PC-3 (cell line): ENCODE measurements at regions of chr16 and their contacts with region 1.

Region 1: DNA sequence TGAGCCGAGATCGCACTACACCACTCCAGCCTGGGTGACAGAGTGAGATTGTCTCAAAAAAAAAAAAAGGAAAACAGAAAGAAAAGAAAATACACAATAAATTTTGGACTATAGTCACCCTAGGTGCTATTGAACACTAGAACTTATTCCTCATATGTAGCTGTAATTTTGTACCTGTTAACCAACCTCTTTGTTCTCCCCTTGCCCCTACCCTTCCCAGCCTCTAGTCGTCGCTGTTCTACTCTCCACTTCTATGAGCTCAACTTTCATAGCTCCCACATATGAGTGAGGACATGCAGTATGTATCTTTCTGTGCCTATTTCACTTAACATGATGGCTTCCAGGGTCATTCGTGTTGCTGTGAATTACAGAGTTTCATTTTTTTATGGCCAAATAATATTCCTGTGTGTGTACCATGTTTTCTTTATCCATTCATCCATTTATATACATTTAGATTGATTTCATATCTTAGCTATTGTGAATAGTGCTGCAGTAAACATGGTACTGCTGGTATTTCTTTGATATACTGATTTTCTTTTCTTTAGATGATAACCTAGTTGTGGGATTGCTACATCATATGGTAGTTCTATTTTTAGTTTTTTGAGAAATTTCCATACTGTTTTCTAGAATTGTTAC is 28.3 kb downstream of the VPS35L start:
- DNase-seq: peak; percentile 58
- ATAC-seq: peak; percentile 77
- H3K4me3 ChIP-seq: no peak overlapping the region
- H3K27ac ChIP-seq: no peak overlapping the region
- H3K4me1 ChIP-seq: no peaks in the 10 kb centered on the region
- H3K27me3 ChIP-seq: no peaks in the 10 kb centered on the region
- CTCF ChIP-seq: peak; percentile 86

Region 2: GRCh38 chr16:19348578-19349315 is 235.0 kb before region 1 on chr16:
- CTCF ChIA-PET with region 1: no interaction called
- POLR2A ChIA-PET with region 1: no interaction called
- intact Hi-C with region 1: no loop called
- DNase-seq: no peak
- ATAC-seq: no peak
- H3K4me3 ChIP-seq: no peak overlapping the region
- H3K27ac ChIP-seq: no peak overlapping the region
- H3K4me1 ChIP-seq: no peaks in the 10 kb centered on the region
- H3K27me3 ChIP-seq: no peaks in the 10 kb centered on the region
- CTCF ChIP-seq: no peak

Region 3: DNA sequence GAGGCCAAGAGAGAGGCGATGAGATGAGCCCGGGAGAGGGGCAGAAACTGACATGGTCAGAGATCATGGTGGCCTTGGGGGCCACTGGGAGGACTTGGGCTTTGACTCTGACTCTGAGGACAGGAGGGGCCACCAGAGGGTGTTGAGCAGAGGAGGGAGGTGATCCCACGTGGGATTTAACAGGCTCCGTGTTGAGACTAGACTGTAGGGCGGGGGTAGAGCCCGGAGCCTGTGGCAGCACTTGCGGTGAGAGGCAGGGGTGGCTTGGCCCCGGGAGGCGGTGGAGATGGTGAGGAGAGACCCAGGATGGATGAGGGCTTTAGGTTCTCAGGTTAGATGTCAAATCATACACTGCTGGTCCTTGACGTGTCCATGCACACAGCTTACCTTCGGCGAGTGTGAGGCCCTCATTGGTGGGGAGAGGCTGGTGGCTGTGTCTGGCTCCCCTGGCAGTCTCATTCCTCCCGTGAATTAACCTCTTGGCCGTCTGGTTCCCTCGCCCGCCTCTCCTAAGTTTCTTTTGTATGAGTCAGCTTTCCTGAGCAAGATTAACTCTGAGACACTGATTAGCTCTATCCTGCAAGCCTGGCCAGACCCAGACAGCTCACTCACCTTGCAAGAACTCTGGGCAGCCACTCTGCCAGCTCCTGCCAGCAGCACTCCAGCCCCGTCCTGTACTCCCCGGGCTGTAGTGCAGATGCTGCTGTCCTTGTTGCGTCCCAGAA is 11.4 kb after region 1 on chr16:
- CTCF ChIA-PET with region 1: interaction called, 22 read pairs
- POLR2A ChIA-PET with region 1: no interaction called
- intact Hi-C with region 1: no loop called
- DNase-seq: peak; percentile 76
- ATAC-seq: peak; percentile 99
- H3K4me3 ChIP-seq: no peak overlapping the region
- H3K27ac ChIP-seq: no peak overlapping the region
- H3K4me1 ChIP-seq: peaks cover 13% of the 10 kb centered on the region
- H3K27me3 ChIP-seq: no peaks in the 10 kb centered on the region
- CTCF ChIP-seq: no peak

Region 4: GRCh38 chr16:19664166-19664565 is 80.4 kb after region 1 on chr16:
- CTCF ChIA-PET with region 1: interaction called, 13 read pairs
- POLR2A ChIA-PET with region 1: no interaction called
- intact Hi-C with region 1: no loop called
- DNase-seq: no peak
- ATAC-seq: no peak
- H3K4me3 ChIP-seq: no peak overlapping the region
- H3K27ac ChIP-seq: no peak overlapping the region
- H3K4me1 ChIP-seq: no peaks in the 10 kb centered on the region
- H3K27me3 ChIP-seq: no peaks in the 10 kb centered on the region
- CTCF ChIP-seq: no peak